CD4-positive, alpha-beta memory T cell (primary cell): ENCODE measurements at regions of chr2 and their contacts with region 1.

Region 1: GRCh38 chr2:156400706-156401678 is 35.2 kb upstream of the GPD2 start:
- DNase-seq: peak; percentile 84 to 88 (median 87)
- H3K4me3 ChIP-seq: peak overlapping the region; percentile 89 to 90
- H3K4me3 Mint-ChIP-seq: peak overlapping the region; percentile 89 to 99 (median 92)
- H3K27ac ChIP-seq: peak overlapping the region; percentile 87
- H3K27ac Mint-ChIP-seq: peak overlapping the region; percentile 93 to 100 (median 98)
- H3K4me1 ChIP-seq: peaks cover 8% of the 10 kb centered on the region
- H3K4me1 Mint-ChIP-seq: peaks cover 15 to 36% (median 21%) of the 10 kb centered on the region in 4 donors
- H3K27me3 ChIP-seq: no peaks in the 10 kb centered on the region
- H3K27me3 Mint-ChIP-seq: peaks cover 0 to 8% of the 10 kb centered on the region in 2 donors

Region 2: GRCh38 chr2:156341452-156342253 is 59.3 kb before region 1 on chr2:
- CTCF ChIA-PET with region 1: interaction called, 14 read pairs
- POLR2A ChIA-PET with region 1: interaction called, 87 read pairs
- intact Hi-C with region 1: loop called (anchors 1 kb)
- DNase-seq: peak; percentile 86 to 94 (median 87)
- H3K4me3 ChIP-seq: peak overlapping the region; percentile 66 to 91
- H3K4me3 Mint-ChIP-seq: peak overlapping the region; percentile 90 to 99 (median 96)
- H3K27ac ChIP-seq: peak overlapping the region; percentile 99
- H3K27ac Mint-ChIP-seq: peak overlapping the region; percentile 95 to 100 (median 99)
- H3K4me1 ChIP-seq: peaks cover 37% of the 10 kb centered on the region
- H3K4me1 Mint-ChIP-seq: peaks cover 21 to 48% (median 33%) of the 10 kb centered on the region in 4 donors
- H3K27me3 ChIP-seq: no peaks in the 10 kb centered on the region
- H3K27me3 Mint-ChIP-seq: peaks cover 0 to 2% of the 10 kb centered on the region in 2 donors

Region 3: DNA sequence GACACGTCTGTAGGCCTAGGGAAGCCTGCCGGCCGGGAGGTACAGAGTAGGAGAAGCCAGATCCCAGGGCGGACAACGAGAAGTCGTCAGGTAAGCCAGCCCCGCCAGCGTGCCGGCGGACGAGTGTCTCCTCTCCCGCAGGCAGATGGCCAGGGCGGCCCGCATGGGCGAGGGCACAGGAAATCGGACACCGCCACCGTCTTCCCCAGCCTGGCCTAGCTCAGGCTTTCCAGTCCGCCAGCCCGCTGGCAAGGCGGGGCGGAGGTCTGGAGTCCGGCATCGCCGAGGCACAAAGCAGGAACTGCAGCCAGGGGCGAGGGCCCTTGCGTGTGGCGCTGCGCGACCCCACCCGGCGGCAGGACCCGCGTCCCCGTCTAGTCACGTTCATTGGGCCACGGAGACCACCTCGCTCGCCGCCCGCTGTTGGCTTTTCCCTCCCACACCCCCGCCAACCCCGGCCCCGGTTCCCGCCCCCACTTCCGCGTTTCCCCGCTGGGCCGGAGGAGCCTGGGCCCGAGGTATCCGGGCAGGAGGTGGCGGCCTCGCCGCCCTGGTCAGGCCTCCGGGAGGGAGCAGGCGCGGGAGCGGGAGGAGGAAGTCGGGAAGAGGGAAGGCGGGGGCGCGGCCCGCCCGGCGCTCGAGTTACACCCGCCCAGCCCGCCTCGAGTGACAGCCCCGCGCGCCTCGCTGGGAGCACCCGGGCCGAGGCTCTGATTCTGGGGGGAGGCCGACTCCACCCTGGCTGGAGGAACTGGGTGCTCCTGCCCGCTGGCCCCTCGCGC is 34.9 kb after region 1 on chr2 and contains the start of gene GPD2:
- CTCF ChIA-PET with region 1: no interaction called
- POLR2A ChIA-PET with region 1: interaction called, 32 read pairs
- intact Hi-C with region 1: loop called (anchors 1 kb)
- DNase-seq: peak; percentile 58 to 68 (median 62)
- H3K4me3 ChIP-seq: peak within 1 kb of the TSS; percentile 20 to 66
- H3K4me3 Mint-ChIP-seq: peak within 1 kb of the TSS; percentile 93 to 99 (median 98)
- H3K27ac ChIP-seq: peak within 1 kb of the TSS; percentile 65
- H3K27ac Mint-ChIP-seq: peak within 1 kb of the TSS; percentile 93 to 98 (median 97)
- H3K4me1 ChIP-seq: peaks cover 22% of the 10 kb centered on the region
- H3K4me1 Mint-ChIP-seq: peaks cover 23 to 46% (median 31%) of the 10 kb centered on the region in 4 donors
- H3K27me3 ChIP-seq: no peaks in the 10 kb centered on the region
- H3K27me3 Mint-ChIP-seq: no peaks in the 10 kb centered on the region
- total RNA-seq, gene GPD2: 12.2 to 13.1 TPM